ENCODE measurements at regions of chr5 and their contacts with region 1.

Region 1: GRCh38 chr5:77449277-77449676 is 42.8 kb downstream of the WDR41 start:
- DNase-seq: no peak
- ATAC-seq: no peak
- H3K4me3 ChIP-seq: no peak overlapping the region
- H3K4me3 Mint-ChIP-seq: no peak overlapping the region
- H3K27ac ChIP-seq: no peak overlapping the region
- H3K27ac Mint-ChIP-seq: no peak overlapping the region
- H3K4me1 ChIP-seq: no peaks in the 10 kb centered on the region
- H3K4me1 Mint-ChIP-seq: no peaks in the 10 kb centered on the region
- H3K27me3 ChIP-seq: no peaks in the 10 kb centered on the region
- H3K27me3 Mint-ChIP-seq: no peaks in the 10 kb centered on the region
- CTCF ChIP-seq: no peak

Region 2: DNA sequence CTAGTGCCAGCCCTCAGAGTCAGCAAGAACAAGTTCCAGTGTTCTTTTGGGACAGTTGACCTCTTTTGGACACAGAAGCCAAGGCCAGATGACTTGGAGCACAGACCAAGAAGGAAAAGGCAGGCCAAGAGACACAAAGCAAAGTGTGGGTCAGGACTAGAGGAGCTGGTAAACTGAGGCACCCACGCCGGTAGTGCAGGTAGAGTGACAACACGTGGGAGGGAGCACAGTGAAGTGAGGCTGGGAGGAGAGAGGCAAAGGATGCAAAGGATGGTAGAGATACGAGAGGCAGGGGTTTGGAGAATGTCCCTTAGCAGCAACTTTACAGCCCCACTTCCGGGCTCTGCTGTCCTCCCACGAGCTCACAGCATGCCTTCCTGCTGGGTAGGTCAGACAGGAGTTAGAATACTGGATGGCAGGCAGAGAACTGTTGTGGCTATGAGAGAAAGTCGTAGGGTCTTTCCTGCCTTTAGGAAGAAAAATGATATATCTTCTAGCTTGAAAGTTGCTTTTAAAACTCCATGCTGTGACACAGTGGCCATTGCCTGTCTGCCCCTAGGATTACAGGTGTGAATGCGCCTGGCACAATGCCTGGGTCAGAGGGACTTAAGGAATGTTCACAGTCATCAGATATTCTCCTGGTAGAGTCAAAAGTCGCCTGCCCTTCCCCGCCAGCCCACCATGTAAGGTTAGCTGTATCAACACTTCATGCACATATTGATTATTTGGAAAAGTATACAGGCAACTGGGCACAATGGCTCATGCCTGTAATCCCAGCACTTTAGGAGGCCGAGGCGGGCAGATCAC is 140.9 kb before region 1 on chr5:
- CTCF ChIA-PET with region 1: no interaction called
- POLR2A ChIA-PET with region 1: no interaction called
- intact Hi-C with region 1: loop called in 1 of 2 experiments (anchors 1 kb)
- DNase-seq: no peak
- ATAC-seq: no peak
- H3K4me3 ChIP-seq: no peak overlapping the region
- H3K4me3 Mint-ChIP-seq: no peak overlapping the region
- H3K27ac ChIP-seq: no peak overlapping the region
- H3K27ac Mint-ChIP-seq: no peak overlapping the region
- H3K4me1 ChIP-seq: no peaks in the 10 kb centered on the region
- H3K4me1 Mint-ChIP-seq: no peaks in the 10 kb centered on the region
- H3K27me3 ChIP-seq: no peaks in the 10 kb centered on the region
- H3K27me3 Mint-ChIP-seq: peaks cover 2% of the 10 kb centered on the region
- CTCF ChIP-seq: no peak

Measured in CD8-positive, alpha-beta T cell (primary cell).